HCT116 (cell line): ENCODE measurements at regions of chr15 and their contacts with region 1.

Region 1: DNA sequence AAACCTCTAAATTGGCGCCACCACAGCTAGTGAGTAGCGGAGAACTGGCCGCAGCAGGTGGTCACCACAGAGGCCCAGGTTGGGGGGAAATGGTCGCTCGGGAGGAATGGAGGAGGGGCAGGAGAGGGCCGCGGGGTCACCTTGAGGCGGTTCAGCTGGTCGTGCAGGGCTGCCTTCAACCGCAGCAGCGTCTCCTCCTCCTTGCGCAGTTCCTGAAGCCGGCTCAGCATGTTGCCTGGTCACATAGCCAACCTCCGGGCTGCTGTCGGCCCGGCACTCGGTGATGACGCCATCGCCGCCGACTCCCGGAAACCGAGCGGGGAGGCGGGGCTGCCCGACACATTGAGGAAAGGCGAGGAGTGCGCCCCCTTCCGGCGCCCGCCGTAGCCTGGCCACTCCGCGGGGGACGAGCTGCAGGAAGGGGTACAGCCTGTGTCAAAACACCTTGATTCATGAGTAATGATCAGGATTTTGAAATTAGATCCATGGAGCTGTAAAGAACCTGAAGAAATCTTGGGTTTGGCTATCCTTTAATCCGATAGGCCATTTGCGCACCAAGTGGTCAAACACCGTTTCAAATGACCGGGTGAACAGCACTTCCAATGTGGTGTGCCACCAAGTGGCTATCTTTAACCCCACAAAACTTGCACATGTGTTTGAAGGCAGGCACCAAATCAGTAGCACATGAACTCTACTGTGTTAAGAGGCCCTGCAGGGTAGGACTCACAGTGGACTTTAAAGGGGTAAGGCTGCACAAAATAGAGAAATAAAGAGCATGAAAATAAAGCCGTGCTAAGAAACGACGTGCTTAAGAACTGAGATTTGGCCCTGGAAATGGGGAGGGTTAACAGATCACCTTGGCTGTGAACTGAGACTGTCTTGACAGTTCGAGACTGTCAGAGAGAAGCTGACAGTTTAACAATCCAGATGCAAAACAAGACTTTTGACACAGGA is at the start of gene SNAPC5:
- DNase-seq: peak; percentile 85
- ATAC-seq: peak; percentile 86
- H3K4me3 ChIP-seq: peak within 1 kb of the TSS; percentile 92 to 95
- H3K27ac ChIP-seq: peak within 1 kb of the TSS; percentile 79
- H3K4me1 ChIP-seq: peaks cover 3 to 28% of the 10 kb centered on the region in 2 experiments; a peak in 3 of 4 replicates
- H3K27me3 ChIP-seq: no peaks in the 10 kb centered on the region
- CTCF ChIP-seq: peak; percentile 92 to 98 (median 98)
- POLR2A ChIP-seq: peak; percentile 32
- RAD21 ChIP-seq: peak; percentile 68
- total RNA-seq, gene SNAPC5: 28.3 TPM

Region 2: DNA sequence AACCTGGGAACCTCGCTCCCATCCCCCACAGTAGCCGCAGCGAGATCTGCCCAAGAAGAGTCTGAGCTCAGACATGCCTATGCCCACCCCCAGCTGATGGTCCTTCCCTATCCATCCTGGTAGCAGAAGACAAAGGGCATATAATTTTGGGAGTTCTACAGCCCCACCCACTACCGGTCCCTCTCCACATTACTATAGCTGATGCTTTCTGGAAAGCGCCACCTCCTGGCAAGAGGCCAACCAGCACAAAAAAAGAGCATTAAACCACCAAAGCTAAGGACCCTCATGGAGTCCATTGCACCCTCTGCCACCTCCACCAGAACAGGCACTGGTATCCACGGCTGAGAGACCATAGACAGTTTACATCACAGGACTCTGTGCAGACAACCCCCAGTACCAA is 412.7 kb before region 1 on chr15:
- CTCF ChIA-PET with region 1: no interaction called
- POLR2A ChIA-PET with region 1: no interaction called
- RAD21 ChIA-PET with region 1: no interaction called
- intact Hi-C with region 1: no loop called
- DNase-seq: no peak
- ATAC-seq: peak; percentile 65
- H3K4me3 ChIP-seq: no peak overlapping the region
- H3K27ac ChIP-seq: no peak overlapping the region
- H3K4me1 ChIP-seq: no peaks in the 10 kb centered on the region
- H3K27me3 ChIP-seq: no peaks in the 10 kb centered on the region
- CTCF ChIP-seq: peak in 2 of 3 experiments; percentile 16 to 47; a peak in 2 of 6 replicates
- POLR2A ChIP-seq: no peak
- RAD21 ChIP-seq: peak; percentile 33; the same call in 1 of the 2 replicates

Region 3: DNA sequence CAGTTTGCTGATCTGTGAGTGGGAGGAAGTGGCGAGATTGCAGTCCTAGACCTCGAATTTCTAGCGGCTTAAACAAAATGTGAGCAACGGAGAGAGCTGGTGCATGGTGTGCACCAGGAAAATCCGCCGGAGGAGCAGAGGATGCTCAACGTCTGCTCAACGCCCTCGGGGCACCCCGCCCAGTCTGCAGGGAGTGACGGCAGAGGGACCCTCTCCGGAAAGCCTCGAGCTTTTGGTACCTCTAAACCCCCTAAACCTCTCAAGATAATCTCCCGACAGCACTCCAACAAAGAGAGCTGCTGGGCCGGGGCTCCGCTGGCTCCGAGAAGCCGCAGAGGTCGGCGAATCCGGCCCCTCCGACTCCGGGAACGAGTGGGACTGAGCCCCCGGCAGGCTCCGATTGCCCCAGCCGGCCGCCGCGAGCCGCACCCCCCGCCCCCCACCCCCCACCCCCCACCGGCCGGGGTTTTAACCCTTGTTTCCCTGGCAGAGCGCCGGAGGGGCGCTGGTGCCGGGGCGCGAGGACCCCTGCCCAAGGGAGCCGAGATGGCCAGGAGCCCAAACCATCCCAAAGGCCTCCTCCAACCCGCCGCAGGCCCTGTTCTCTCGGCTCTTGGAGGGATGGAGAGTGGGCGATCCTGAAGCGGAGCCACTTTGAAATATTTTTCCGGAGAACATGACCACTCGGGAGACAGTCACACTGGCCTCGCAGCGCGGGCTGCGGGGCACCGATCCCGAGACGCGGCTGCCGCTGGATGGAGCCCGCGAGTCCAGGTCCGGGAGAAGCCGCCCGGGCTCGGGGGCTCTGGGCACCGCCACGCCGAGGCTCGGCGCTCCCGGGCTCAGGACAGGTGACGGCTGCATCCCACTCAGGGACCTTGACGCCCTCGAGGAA is 245.7 kb before region 1 on chr15:
- CTCF ChIA-PET with region 1: no interaction called
- POLR2A ChIA-PET with region 1: no interaction called
- RAD21 ChIA-PET with region 1: no interaction called
- intact Hi-C with region 1: loop called (anchors 2 kb)
- DNase-seq: peak; percentile 27
- ATAC-seq: peak; percentile 87
- H3K4me3 ChIP-seq: peak overlapping the region; percentile 65 to 78
- H3K27ac ChIP-seq: no peak overlapping the region
- H3K4me1 ChIP-seq: peaks cover 0 to 20% of the 10 kb centered on the region in 2 experiments; a peak in 2 of 4 replicates
- H3K27me3 ChIP-seq: peaks cover 3% of the 10 kb centered on the region; the same call in 1 of the 2 replicates
- CTCF ChIP-seq: peak; percentile 54 to 89 (median 70); a peak in 5 of 6 replicates
- POLR2A ChIP-seq: no peak
- RAD21 ChIP-seq: peak; percentile 57

Region 4: DNA sequence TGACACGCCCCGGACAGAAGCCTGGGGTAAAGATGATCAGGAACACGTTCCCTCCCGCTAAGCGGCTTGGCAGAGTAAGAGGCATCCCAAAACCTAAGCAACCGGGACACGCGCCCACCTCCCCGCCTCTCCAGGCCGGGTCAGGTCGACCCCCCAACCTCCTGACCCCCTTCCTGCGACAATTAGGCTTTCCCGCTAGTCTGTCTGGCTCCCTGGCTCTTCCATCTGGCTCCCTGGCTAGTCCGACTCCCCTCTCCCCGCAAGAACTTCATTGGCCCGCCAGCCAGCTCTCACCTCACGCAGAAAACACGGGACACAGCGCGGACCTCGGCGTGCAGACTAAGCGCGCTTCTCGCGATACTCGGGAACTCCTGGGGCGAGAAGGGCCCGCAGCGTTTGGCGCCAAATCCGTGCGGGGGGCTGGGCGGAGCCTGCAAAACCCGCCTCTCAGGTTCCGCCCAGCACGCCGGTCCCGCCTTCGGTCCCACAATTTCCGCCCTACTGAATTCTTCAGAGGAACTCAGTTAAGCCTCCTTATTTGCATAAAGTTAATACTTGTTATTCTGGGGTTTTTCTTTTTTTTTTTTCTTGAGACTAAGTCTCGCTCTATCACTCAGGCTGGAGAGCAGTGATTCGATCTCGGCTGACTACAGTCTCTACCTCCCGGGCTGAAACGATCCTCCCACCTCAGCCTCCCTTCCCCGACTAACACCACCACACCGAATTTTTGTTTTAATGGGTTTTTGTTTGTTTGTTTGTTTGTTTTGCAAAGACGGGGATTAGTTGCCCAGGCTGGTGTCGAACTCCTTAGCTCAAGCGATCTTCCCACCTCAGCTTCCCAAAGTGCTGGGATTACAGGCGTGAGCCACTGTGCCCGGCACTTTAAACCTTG is 141.2 kb before region 1 on chr15 and contains the start of gene TIPIN:
- CTCF ChIA-PET with region 1: no interaction called
- POLR2A ChIA-PET with region 1: no interaction called
- RAD21 ChIA-PET with region 1: no interaction called
- intact Hi-C with region 1: loop called (anchors 5 kb)
- DNase-seq: peak; percentile 91
- ATAC-seq: peak; percentile 96
- H3K4me3 ChIP-seq: peak within 1 kb of the TSS; percentile 83 to 87
- H3K27ac ChIP-seq: peak within 1 kb of the TSS; percentile 77
- H3K4me1 ChIP-seq: peaks cover 17 to 29% of the 10 kb centered on the region in 2 experiments
- H3K27me3 ChIP-seq: no peaks in the 10 kb centered on the region
- CTCF ChIP-seq: no peak
- POLR2A ChIP-seq: peak; percentile 91
- RAD21 ChIP-seq: no peak
- total RNA-seq, gene TIPIN: 28.1 TPM

Region 5: DNA sequence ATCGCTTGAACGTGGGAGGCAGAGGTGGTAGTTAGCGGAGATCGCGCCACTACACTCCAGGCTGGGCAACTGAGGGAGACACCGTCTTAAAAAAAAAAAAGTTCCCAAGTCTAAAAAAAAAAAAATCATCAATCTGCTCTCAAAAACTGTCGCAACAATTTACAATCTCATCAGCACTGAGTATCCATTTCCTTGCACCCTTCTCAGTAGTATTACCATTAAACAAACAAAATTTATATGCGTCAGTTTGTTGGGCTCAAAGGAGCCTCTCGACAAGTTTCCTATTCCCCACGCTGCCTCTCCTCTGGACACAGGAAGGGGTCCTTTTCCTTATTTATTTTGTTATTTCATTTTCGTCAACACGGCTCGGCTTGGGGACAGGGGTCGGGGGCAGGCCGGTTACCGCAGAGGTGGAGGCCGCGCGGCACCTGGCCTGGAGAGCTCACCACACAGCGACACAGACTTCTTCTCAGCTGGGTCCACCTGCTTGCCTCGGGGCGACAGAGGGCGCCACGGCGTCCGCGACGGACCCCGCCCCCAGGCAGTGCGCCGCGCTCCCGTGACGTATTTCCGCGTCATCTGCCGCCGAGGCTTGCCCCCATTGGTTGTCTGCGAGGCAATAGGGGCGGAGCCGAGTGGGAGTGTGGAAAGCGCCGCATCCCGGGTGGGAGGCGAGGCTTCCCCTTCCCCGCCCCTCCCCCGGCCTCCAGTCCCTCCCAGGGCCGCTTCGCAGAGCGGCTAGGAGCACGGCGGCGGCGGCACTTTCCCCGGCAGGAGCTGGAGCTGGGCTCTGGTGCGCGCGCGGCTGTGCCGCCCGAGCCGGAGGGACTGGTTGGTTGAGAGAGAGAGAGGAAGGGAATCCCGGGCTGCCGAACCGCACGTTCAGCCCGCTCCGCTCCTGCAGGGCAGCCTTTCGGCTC is 111.3 kb before region 1 on chr15 and contains the start of gene MAP2K1:
- CTCF ChIA-PET with region 1: interaction called, 27 read pairs
- POLR2A ChIA-PET with region 1: interaction called, 12 read pairs
- RAD21 ChIA-PET with region 1: no interaction called
- intact Hi-C with region 1: loop called (anchors 1 kb)
- DNase-seq: peak; percentile 90
- ATAC-seq: peak; percentile 93
- H3K4me3 ChIP-seq: peak within 1 kb of the TSS; percentile 64 to 86
- H3K27ac ChIP-seq: peak within 1 kb of the TSS; percentile 79
- H3K4me1 ChIP-seq: peaks cover 4 to 28% of the 10 kb centered on the region in 2 experiments; a peak in 3 of 4 replicates
- H3K27me3 ChIP-seq: no peaks in the 10 kb centered on the region
- CTCF ChIP-seq: peak; percentile 52; a peak in 3 of 6 replicates
- POLR2A ChIP-seq: peak; percentile 52
- RAD21 ChIP-seq: peak; percentile 54
- total RNA-seq, gene MAP2K1: 52.3 TPM